ENCODE measurements at regions of chr10 and their contacts with region 1.

Region 1: GRCh38 chr10:119725828-119726675 is at the start of gene INPP5F:
- DNase-seq: peak; percentile 88
- ATAC-seq: peak; percentile 88
- H3K4me3 ChIP-seq: peak within 1 kb of the TSS; percentile 95
- H3K27ac ChIP-seq: peak within 1 kb of the TSS; percentile 82
- H3K4me1 ChIP-seq: peaks cover 17% of the 10 kb centered on the region
- H3K27me3 ChIP-seq: no peaks in the 10 kb centered on the region
- CTCF ChIP-seq: peak in 2 of 3 experiments; percentile 17 to 38; a peak in 3 of 6 replicates
- EP300 ChIP-seq: no peak
- POLR2A ChIP-seq: peak; percentile 59; the same call in 1 of the 2 replicates
- RAD21 ChIP-seq: no peak
- polyA plus RNA-seq, gene INPP5F: 6.0 to 13.4 TPM

Region 2: DNA sequence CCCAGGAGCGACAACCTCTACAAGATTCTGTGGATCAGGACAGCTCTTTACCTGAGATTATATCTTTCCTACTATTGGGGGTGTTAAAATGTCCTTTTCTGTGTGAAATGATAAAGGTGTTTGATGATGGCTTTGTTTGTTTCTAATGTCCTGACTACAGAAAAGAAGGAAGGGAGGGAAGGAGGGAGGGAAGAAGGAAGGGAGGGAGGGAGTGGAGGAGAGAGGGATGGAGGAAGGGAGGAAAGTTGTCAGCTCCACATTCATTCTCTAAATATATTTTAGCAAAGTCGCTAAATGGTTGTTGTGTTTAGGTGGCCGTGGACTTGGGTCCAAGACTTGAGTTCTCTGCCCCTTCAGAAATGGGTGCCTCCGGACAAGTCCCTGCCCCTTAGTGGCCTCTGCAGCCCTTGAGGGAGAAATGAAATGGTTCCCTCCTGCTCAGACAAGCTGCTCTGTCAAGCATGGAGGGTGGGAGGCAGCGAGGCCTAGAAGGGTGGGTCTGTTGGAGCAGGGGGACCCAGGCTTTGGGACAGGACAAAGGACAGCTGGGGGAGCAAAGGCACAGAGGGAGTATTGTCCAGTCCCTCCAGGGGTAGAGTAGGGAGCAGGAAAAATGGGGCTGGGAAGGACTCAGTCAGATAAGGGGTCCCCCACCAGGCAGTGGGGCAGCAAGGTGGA is 188.0 kb before region 1 on chr10:
- CTCF ChIA-PET with region 1: interaction called, 3 read pairs
- POLR2A ChIA-PET with region 1: interaction called, 11 read pairs
- RAD21 ChIA-PET with region 1: no interaction called
- SMC1A ChIA-PET with region 1: no interaction called
- in situ Hi-C with region 1: no loop called
- intact Hi-C with region 1: no loop called
- DNase-seq: no peak
- ATAC-seq: no peak
- H3K4me3 ChIP-seq: peak overlapping the region; percentile 84; the same call in 1 of the 2 replicates
- H3K27ac ChIP-seq: peak overlapping the region; percentile 60
- H3K4me1 ChIP-seq: peaks cover 30% of the 10 kb centered on the region
- H3K27me3 ChIP-seq: no peaks in the 10 kb centered on the region
- CTCF ChIP-seq: no peak
- EP300 ChIP-seq: no peak
- POLR2A ChIP-seq: no peak
- RAD21 ChIP-seq: no peak

Region 3: GRCh38 chr10:119693262-119693957 is 32.6 kb before region 1 on chr10:
- CTCF ChIA-PET with region 1: interaction called, 68 read pairs
- POLR2A ChIA-PET with region 1: interaction called, 19 read pairs
- RAD21 ChIA-PET with region 1: interaction called, 82 read pairs
- SMC1A ChIA-PET with region 1: interaction called, 36 read pairs
- in situ Hi-C with region 1: no loop called
- intact Hi-C with region 1: loop called (anchors 2 kb)
- DNase-seq: no peak
- ATAC-seq: peak; percentile 98
- H3K4me3 ChIP-seq: no peak overlapping the region
- H3K27ac ChIP-seq: no peak overlapping the region
- H3K4me1 ChIP-seq: peaks cover 9% of the 10 kb centered on the region
- H3K27me3 ChIP-seq: no peaks in the 10 kb centered on the region
- CTCF ChIP-seq: no peak
- EP300 ChIP-seq: peak in 1 of 2 experiments; percentile 65; a peak in 2 of 4 replicates
- POLR2A ChIP-seq: no peak
- RAD21 ChIP-seq: no peak

Region 4: DNA sequence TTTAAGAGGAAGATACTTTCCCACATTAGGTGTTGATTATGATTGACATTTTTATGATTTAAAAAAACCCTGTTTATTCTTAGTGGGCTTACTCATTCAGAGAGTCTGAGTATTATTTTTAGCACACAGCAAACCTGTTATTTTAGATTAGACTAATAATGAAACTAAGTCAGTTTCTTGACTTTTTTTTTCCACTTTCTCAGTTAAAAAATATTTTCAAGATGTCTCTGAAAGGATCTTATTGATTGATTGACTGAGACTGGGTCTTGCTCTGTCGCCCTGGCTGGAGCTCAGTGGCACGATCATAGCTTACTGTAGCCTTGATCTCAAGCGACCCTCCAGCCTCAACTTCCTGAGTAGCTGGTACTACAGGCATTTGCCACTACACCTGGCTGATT is 20.6 kb before region 1 on chr10:
- CTCF ChIA-PET with region 1: interaction called, 43 read pairs
- POLR2A ChIA-PET with region 1: interaction called, 85 read pairs
- RAD21 ChIA-PET with region 1: interaction called, 143 read pairs
- SMC1A ChIA-PET with region 1: interaction called, 165 read pairs
- in situ Hi-C with region 1: no loop called
- intact Hi-C with region 1: loop called (anchors 1 kb)
- DNase-seq: peak; percentile 76
- ATAC-seq: peak; percentile 40
- H3K4me3 ChIP-seq: no peak overlapping the region; the same call in 1 of the 2 replicates
- H3K27ac ChIP-seq: peak overlapping the region; percentile 92
- H3K4me1 ChIP-seq: peaks cover 72% of the 10 kb centered on the region
- H3K27me3 ChIP-seq: no peaks in the 10 kb centered on the region
- CTCF ChIP-seq: no peak
- EP300 ChIP-seq: peak; percentile 94 to 100
- POLR2A ChIP-seq: no peak
- RAD21 ChIP-seq: no peak

Region 5: DNA sequence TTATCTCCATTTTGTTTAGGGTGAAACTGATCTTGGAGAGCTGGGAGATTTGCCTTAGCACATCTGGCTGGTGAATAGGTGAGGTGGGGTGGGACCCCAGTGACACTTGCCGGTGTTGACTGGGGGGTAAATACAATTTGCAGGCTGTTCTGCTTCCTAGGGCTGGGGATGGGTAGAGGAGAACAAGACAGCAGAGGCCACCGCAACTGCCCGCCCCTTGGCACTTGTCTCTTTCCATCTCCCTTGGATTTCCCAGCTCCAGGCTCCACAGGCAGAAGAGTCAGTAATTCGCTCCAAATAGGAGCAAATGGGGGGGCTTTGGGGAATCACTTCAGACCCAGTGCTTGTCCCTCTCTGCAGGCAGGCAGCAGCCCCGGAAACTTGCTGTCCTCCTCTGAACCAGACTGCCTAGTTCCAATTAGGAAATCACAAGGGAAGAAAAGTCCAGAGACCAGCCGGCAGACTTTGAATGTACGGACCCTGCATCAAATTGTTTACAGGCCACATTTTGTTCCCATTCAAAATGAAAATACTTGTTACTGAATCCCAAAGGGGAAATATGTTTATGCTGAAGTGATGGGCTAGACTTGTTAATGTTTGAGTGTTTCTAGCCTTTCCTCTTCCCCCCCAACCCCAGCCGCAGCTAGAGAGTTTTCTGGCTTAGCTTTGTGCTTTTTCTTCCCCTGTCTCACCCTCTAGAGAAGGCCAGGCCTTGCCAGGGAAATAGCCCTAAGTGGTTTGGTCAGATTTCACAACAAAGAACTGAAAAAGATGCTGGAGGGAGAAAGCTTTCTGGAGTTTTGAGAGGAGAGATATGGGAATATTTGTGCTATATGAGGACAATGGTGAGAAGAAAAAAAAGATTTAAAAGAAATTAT is 10.2 kb before region 1 on chr10:
- CTCF ChIA-PET with region 1: interaction called, 7 read pairs
- POLR2A ChIA-PET with region 1: interaction called, 53 read pairs
- RAD21 ChIA-PET with region 1: interaction called, 9 read pairs
- SMC1A ChIA-PET with region 1: interaction called, 21 read pairs
- in situ Hi-C with region 1: no loop called
- intact Hi-C with region 1: no loop called
- DNase-seq: no peak
- ATAC-seq: no peak
- H3K4me3 ChIP-seq: no peak overlapping the region
- H3K27ac ChIP-seq: no peak overlapping the region
- H3K4me1 ChIP-seq: no peaks in the 10 kb centered on the region
- H3K27me3 ChIP-seq: no peaks in the 10 kb centered on the region
- CTCF ChIP-seq: no peak
- EP300 ChIP-seq: no peak
- POLR2A ChIP-seq: no peak
- RAD21 ChIP-seq: no peak

Region 6: DNA sequence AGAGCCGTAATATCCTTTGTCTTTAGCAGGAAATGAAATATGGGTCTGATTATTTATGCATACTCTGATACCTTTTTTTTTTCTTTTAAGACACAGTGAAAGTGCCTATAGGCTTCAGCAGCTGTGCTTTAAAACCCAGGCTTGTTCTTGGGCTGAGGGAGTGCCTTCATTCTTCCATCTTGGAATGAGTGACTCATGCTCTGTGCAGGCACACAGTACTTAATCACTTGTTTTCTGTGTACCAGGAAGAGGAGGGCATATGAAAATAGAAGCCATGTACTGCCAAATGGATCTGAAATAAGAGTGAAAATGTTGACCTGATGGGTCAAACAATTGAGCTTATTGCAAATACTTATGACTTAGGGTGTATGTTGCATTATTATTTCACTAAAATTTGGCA is 11.8 kb after region 1 on chr10:
- CTCF ChIA-PET with region 1: interaction called, 35 read pairs
- POLR2A ChIA-PET with region 1: interaction called, 29 read pairs
- RAD21 ChIA-PET with region 1: interaction called, 27 read pairs
- SMC1A ChIA-PET with region 1: interaction called, 57 read pairs
- in situ Hi-C with region 1: no loop called
- intact Hi-C with region 1: no loop called
- DNase-seq: no peak
- ATAC-seq: peak; percentile 39
- H3K4me3 ChIP-seq: no peak overlapping the region
- H3K27ac ChIP-seq: no peak overlapping the region
- H3K4me1 ChIP-seq: no peaks in the 10 kb centered on the region
- H3K27me3 ChIP-seq: no peaks in the 10 kb centered on the region
- CTCF ChIP-seq: no peak
- EP300 ChIP-seq: no peak
- POLR2A ChIP-seq: no peak
- RAD21 ChIP-seq: no peak

Region 7: DNA sequence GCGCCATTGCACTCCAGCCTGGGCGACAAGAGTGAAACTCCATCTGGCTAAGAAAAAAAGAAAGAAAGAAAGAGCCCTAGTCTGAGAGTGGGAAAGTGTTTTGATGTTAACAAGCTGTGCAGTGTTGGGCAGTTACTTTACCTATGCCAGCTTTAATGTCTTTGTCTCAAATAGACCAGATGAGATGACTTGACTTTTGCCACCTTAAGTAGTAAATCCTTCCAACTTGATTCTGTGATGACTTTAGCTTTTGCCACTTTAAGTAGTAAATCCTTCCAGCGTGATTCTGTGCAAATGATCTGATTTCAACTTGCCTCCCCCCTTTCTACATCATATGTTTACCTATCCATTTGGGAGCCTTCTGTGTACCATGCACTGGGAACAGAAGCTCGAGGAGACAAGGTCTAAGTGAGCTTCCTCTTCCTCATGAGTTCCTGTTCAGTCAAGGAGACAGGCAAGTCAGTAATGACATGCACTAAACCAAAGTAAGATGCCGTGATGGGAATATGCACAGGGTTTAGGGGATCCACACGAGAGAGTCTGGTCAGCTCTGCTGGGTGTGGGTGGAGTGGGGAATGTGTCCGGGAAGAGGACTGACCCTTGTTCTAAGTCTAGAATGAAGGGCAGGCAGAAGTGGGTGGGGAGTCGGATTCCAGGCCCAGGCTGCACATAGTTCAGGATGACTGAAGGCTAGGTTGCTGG is 17.0 kb after region 1 on chr10:
- CTCF ChIA-PET with region 1: interaction called, 35 read pairs
- POLR2A ChIA-PET with region 1: interaction called, 29 read pairs
- RAD21 ChIA-PET with region 1: interaction called, 27 read pairs
- SMC1A ChIA-PET with region 1: interaction called, 57 read pairs
- in situ Hi-C with region 1: no loop called
- intact Hi-C with region 1: no loop called
- DNase-seq: no peak
- ATAC-seq: no peak
- H3K4me3 ChIP-seq: no peak overlapping the region
- H3K27ac ChIP-seq: no peak overlapping the region
- H3K4me1 ChIP-seq: no peaks in the 10 kb centered on the region
- H3K27me3 ChIP-seq: no peaks in the 10 kb centered on the region
- CTCF ChIP-seq: no peak
- EP300 ChIP-seq: no peak
- POLR2A ChIP-seq: no peak
- RAD21 ChIP-seq: no peak

Region 8: GRCh38 chr10:120005207-120006201 is 279.5 kb after region 1 on chr10:
- CTCF ChIA-PET with region 1: no interaction called
- POLR2A ChIA-PET with region 1: no interaction called
- RAD21 ChIA-PET with region 1: no interaction called
- SMC1A ChIA-PET with region 1: no interaction called
- in situ Hi-C with region 1: no loop called
- intact Hi-C with region 1: no loop called
- DNase-seq: no peak
- ATAC-seq: no peak
- H3K4me3 ChIP-seq: no peak overlapping the region
- H3K27ac ChIP-seq: no peak overlapping the region
- H3K4me1 ChIP-seq: no peaks in the 10 kb centered on the region
- H3K27me3 ChIP-seq: no peaks in the 10 kb centered on the region
- CTCF ChIP-seq: no peak
- EP300 ChIP-seq: no peak
- POLR2A ChIP-seq: no peak
- RAD21 ChIP-seq: no peak